ENCODE measurements at regions of chrX and their contacts with region 1.

Region 1: GRCh38 chrX:38664285-38664684 is 102.9 kb downstream of the TSPAN7 start:
- DNase-seq: peak in 1 of 2 donors; percentile 6
- ATAC-seq: no peak
- H3K4me3 ChIP-seq: no peak overlapping the region
- H3K27ac ChIP-seq: no peak overlapping the region
- H3K4me1 ChIP-seq: no peaks in the 10 kb centered on the region
- H3K27me3 ChIP-seq: peaks cover 0 to 17% (median 0%) of the 10 kb centered on the region in 7 donors
- CTCF ChIP-seq: peak in 8 of 9 donors; percentile 8 to 55 (median 40)

Region 2: DNA sequence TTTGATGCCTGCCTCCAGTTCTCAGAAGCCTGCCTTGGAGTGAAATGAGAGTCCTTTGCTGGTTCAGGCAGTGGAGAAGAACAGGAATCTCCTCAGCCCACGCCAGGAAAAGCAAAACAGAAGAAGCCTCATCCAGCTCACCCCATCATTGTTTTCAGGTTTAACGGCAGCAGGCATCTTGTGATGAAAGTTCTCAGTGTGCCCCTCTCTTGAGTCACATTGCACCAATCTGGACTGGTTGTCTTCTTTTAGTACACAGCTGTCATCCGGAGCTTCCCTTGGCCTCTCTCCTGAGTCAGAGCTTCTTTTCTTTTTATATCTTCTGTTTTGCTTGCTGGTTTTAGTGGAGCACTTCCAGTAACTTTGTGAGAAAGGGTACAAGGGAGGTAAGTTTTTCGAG is 52.0 kb before region 1 on chrX:
- intact Hi-C with region 1: loop called in 1 of 10 experiments (anchors 5 kb)
- DNase-seq: no peak
- ATAC-seq: no peak
- H3K4me3 ChIP-seq: no peak overlapping the region
- H3K27ac ChIP-seq: no peak overlapping the region
- H3K4me1 ChIP-seq: peaks cover 0 to 11% (median 0%) of the 10 kb centered on the region in 9 donors
- H3K27me3 ChIP-seq: peaks cover 0 to 45% (median 0%) of the 10 kb centered on the region in 7 donors
- CTCF ChIP-seq: no peak

Measured in heart right ventricle (tissue), 16 donors.